ENCODE measurements at regions of chr7 and their contacts with region 1.

Region 1: GRCh38 chr7:8724080-8724718 is 290.8 kb downstream of the NXPH1 start:
- DNase-seq: peak in 7 of 10 donors; percentile 14 to 68 (median 48)
- H3K4me3 ChIP-seq: no peak overlapping the region
- H3K27ac ChIP-seq: no peak overlapping the region
- H3K27me3 ChIP-seq: no peaks in the 10 kb centered on the region
- CTCF ChIP-seq: peak; percentile 15 to 79 (median 62)

Region 2: GRCh38 chr7:8433477-8434289 is 290.5 kb before region 1 on chr7 and contains the start of gene NXPH1:
- intact Hi-C with region 1: loop called in 1 of 2 experiments (anchors 2 kb)
- DNase-seq: peak in 1 of 10 donors; percentile 27
- H3K4me3 ChIP-seq: peak within 1 kb of the TSS; percentile 10 to 65 (median 46)
- H3K27ac ChIP-seq: peak within 1 kb of the TSS in 36 of 59 donors; percentile 1 to 73 (median 50)
- H3K27me3 ChIP-seq: peaks cover 9 to 95% (median 69%) of the 10 kb centered on the region in 45 donors
- CTCF ChIP-seq: peak in 3 of 56 donors; percentile 8 to 19 (median 13)
- total RNA-seq, gene NXPH1: 6.8 to 51.5 (median 21.6) TPM

Region 3: DNA sequence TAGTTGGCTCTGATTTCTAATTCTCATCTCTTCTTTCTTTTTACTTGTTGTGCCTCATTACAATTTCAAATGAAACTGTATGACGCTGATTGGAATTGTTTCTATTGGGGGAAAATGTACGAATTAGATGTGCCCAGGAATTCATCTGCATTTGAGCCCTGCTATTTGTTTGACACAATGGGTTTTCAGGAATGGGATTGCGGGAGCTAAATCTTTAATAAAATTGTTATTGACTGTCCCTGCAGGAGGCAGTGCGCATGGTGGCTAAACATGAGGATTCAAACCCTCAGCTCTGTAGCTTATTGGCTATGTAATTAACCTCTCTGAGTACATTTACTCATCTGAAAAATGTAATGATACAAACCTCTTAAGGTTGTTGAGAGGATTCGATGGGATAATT is 109.2 kb before region 1 on chr7:
- intact Hi-C with region 1: no loop called
- DNase-seq: no peak
- H3K4me3 ChIP-seq: no peak overlapping the region
- H3K27ac ChIP-seq: no peak overlapping the region
- H3K27me3 ChIP-seq: peaks cover 0 to 13% (median 0%) of the 10 kb centered on the region in 45 donors
- CTCF ChIP-seq: no peak

Region 4: GRCh38 chr7:8684426-8684825 is 39.8 kb before region 1 on chr7:
- intact Hi-C with region 1: no loop called
- DNase-seq: no peak
- H3K4me3 ChIP-seq: no peak overlapping the region
- H3K27ac ChIP-seq: no peak overlapping the region
- H3K27me3 ChIP-seq: no peaks in the 10 kb centered on the region
- CTCF ChIP-seq: no peak